GM12878 (cell line): ENCODE measurements at regions of chr5 and their contacts with region 1.

Region 1: DNA sequence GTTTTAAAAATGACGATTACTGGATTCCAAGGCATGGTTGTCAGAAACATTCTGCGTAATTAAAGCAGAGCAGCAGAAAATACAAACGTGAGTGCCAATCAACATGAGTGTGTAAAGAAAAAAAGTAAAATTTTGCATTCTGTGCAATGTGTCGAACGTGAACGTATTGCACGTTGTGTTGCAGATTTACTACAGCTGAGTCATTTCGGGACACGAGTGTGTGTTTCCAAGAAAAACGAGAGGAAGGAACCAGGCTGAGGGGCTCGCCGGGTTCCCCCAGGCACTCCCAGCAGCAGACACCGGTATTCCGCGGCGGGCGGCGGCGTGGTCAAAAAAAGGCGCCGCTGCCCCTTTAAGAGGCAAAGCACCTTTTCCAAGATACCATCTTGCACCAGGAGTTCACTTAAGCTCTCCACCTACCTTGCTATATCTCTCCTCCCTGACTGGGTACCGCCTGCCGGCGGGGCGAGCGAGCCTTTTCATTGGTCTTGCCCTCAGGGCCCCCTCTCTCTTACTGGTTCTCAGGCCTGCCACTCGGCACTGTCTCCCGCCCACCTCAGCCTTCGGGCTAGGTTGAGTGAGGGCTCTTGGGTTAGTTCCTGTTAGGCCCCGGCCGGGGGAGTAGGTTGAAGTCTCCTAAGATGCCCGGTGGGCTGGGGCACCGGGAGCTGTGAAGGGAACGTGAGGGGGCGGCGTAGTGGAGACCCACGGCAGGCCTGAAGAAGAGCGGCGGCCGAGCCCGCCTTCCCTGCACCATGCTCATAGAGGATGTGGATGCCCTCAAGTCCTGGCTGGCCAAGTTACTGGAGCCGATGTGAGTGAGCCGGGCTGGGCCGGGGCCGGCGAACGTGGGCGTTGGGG is at the start of gene RBM27:
- DNase-seq: peak; percentile 96
- ATAC-seq: peak; percentile 99
- H3K4me3 ChIP-seq: peak within 1 kb of the TSS; percentile 85
- H3K27ac ChIP-seq: peak within 1 kb of the TSS; percentile 72
- H3K4me1 ChIP-seq: peaks cover 8% of the 10 kb centered on the region; the same call in 1 of the 2 replicates
- H3K27me3 ChIP-seq: no peaks in the 10 kb centered on the region
- CTCF ChIP-seq: no peak
- EP300 ChIP-seq: no peak
- POLR2A ChIP-seq: peak; percentile 85
- RAD21 ChIP-seq: no peak
- polyA plus RNA-seq, gene RBM27: 5.8 to 6.9 TPM

Region 2: DNA sequence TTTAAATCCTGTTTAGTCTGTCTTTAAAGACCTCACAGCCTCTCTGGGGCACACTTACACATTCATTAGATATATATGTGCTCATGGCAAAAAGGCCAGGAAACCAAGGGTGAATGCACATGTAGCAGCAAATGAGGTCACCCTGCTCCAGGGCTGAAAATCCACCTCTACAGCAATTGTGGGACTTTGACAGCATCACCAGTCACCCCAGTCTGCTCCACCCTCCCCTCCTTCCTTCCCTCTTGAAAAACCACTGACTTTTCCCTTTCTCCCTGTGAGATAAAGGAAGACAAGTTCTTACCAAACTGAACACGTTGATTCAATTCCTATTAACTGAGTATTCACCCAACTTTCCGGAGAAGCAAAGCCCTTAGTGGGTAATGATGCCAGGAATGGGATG is 282.0 kb before region 1 on chr5:
- CTCF ChIA-PET with region 1: no interaction called
- POLR2A ChIA-PET with region 1: no interaction called
- RAD21 ChIA-PET with region 1: no interaction called
- SMC1A ChIA-PET with region 1: no interaction called
- in situ Hi-C with region 1: no loop called
- intact Hi-C with region 1: no loop called
- DNase-seq: no peak
- ATAC-seq: no peak
- H3K4me3 ChIP-seq: no peak overlapping the region
- H3K27ac ChIP-seq: no peak overlapping the region
- H3K4me1 ChIP-seq: no peaks in the 10 kb centered on the region
- H3K27me3 ChIP-seq: no peaks in the 10 kb centered on the region
- CTCF ChIP-seq: no peak
- EP300 ChIP-seq: no peak
- POLR2A ChIP-seq: no peak
- RAD21 ChIP-seq: no peak

Region 3: GRCh38 chr5:146173597-146173996 is 29.6 kb before region 1 on chr5:
- CTCF ChIA-PET with region 1: interaction called, 3 read pairs
- POLR2A ChIA-PET with region 1: interaction called, 9 read pairs
- RAD21 ChIA-PET with region 1: interaction called, 6 read pairs
- SMC1A ChIA-PET with region 1: interaction called, 3 read pairs
- in situ Hi-C with region 1: no loop called
- intact Hi-C with region 1: loop called (anchors 2 kb)
- DNase-seq: peak; percentile 69
- ATAC-seq: peak; percentile 96
- H3K4me3 ChIP-seq: no peak overlapping the region
- H3K27ac ChIP-seq: peak overlapping the region; percentile 10; the same call in 1 of the 2 replicates
- H3K4me1 ChIP-seq: no peaks in the 10 kb centered on the region; the same call in none of the 2 replicates
- H3K27me3 ChIP-seq: no peaks in the 10 kb centered on the region
- CTCF ChIP-seq: no peak
- EP300 ChIP-seq: peak; percentile 79 to 82
- POLR2A ChIP-seq: no peak
- RAD21 ChIP-seq: no peak

Region 4: GRCh38 chr5:146188358-146188757 is 14.9 kb before region 1 on chr5:
- CTCF ChIA-PET with region 1: interaction called, 5 read pairs
- POLR2A ChIA-PET with region 1: interaction called, 10 read pairs
- RAD21 ChIA-PET with region 1: interaction called, 3 read pairs
- SMC1A ChIA-PET with region 1: interaction called, 5 read pairs
- in situ Hi-C with region 1: no loop called
- intact Hi-C with region 1: loop called (anchors 2 kb)
- DNase-seq: no peak
- ATAC-seq: no peak
- H3K4me3 ChIP-seq: no peak overlapping the region
- H3K27ac ChIP-seq: no peak overlapping the region
- H3K4me1 ChIP-seq: no peaks in the 10 kb centered on the region
- H3K27me3 ChIP-seq: no peaks in the 10 kb centered on the region; a peak in 1 of 4 replicates
- CTCF ChIP-seq: no peak
- EP300 ChIP-seq: no peak
- POLR2A ChIP-seq: no peak
- RAD21 ChIP-seq: no peak